PC-9 (cell line): ENCODE measurements at regions of chr22 and their contacts with region 1.

Region 1: DNA sequence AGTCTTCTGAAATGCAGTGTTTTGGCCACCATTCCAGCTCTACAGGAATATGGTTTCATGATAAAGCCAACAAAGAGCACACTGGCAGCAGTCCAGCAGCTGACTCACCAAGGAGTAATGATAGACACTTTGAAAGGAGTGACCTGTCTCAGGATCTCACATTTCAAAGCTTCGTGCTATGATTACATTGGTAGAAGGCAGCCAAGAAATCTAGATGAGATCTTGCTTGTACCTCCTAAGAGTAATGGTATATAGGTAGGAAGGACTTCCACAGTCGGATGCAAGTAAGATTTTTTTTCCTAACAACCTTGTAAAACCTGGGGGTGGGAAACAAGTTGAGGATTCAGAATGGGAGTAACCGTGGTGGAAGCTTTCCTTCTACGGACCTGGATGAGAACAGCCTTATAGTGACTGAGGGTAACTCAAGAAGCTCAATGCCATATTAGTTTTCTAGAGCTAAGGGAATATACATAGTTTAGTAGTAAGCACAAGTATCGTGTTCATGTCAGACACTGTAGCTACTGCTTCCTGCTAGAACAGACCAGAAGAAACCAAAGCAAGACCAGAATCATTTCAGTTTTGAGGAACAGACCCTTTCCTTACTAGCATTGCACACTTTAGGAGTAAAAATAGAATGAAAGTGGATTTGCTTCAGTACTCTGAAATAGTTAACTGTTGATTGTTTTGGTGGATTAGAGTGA is 25.0 kb downstream of the MTMR3 start:
- DNase-seq: peak; percentile 84 to 98
- H3K4me3 ChIP-seq: peak overlapping the region; percentile 44; the same call in 1 of the 2 replicates
- H3K27ac ChIP-seq: peak overlapping the region; percentile 91
- H3K4me1 ChIP-seq: peaks cover 31% of the 10 kb centered on the region
- H3K27me3 ChIP-seq: no peaks in the 10 kb centered on the region
- CTCF ChIP-seq: no peak

Region 2: GRCh38 chr22:29275819-29276565 is 632.0 kb before region 1 on chr22:
- CTCF ChIA-PET with region 1: no interaction called
- POLR2A ChIA-PET with region 1: interaction called, 12 read pairs
- intact Hi-C with region 1: no loop called
- DNase-seq: no peak
- H3K4me3 ChIP-seq: no peak overlapping the region
- H3K27ac ChIP-seq: no peak overlapping the region
- H3K4me1 ChIP-seq: peaks cover 7% of the 10 kb centered on the region
- H3K27me3 ChIP-seq: no peaks in the 10 kb centered on the region
- CTCF ChIP-seq: no peak

Region 3: DNA sequence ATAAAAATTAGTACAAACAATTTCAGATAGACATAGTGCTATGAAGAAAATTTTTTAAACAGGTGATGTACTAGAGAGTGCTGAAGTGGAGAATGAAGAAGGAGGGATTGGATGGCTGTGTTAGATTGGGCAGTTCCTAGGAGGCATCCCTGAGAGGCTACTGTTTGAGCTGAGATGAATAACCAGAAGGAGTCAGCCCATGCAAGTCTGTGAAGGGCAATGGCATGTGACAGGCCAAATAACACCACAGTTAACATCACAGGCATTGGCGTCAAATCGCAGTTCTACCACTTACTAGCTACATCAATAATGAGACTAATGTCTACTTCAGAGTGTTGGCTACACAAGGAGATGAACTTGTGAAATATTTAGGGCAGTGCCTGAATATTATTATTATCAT is 207.7 kb after region 1 on chr22:
- CTCF ChIA-PET with region 1: no interaction called
- POLR2A ChIA-PET with region 1: interaction called, 11 read pairs
- intact Hi-C with region 1: no loop called
- DNase-seq: no peak
- H3K4me3 ChIP-seq: no peak overlapping the region
- H3K27ac ChIP-seq: peak overlapping the region; percentile 82
- H3K4me1 ChIP-seq: peaks cover 44% of the 10 kb centered on the region
- H3K27me3 ChIP-seq: no peaks in the 10 kb centered on the region
- CTCF ChIP-seq: no peak